Heart right ventricle (tissue), 16 donors: ENCODE measurements at regions of chr15 and their contacts with region 1.

Region 1: GRCh38 chr15:44654858-44655257 is 8.6 kb downstream of the SPG11 start:
- DNase-seq: no peak
- ATAC-seq: no peak
- H3K4me3 ChIP-seq: no peak overlapping the region
- H3K27ac ChIP-seq: no peak overlapping the region
- H3K4me1 ChIP-seq: peaks cover 0 to 21% (median 6%) of the 10 kb centered on the region in 9 donors
- H3K27me3 ChIP-seq: no peaks in the 10 kb centered on the region
- CTCF ChIP-seq: no peak

Region 2: GRCh38 chr15:44584162-44584749 is 70.6 kb before region 1 on chr15:
- intact Hi-C with region 1: loop called in 1 of 10 experiments (anchors 5 kb)
- DNase-seq: peak in 1 of 2 donors; percentile 38
- ATAC-seq: peak in 6 of 8 donors; percentile 49 to 75 (median 70)
- H3K4me3 ChIP-seq: no peak overlapping the region
- H3K27ac ChIP-seq: no peak overlapping the region
- H3K4me1 ChIP-seq: no peaks in the 10 kb centered on the region
- H3K27me3 ChIP-seq: no peaks in the 10 kb centered on the region
- CTCF ChIP-seq: peak in 7 of 9 donors; percentile 18 to 54 (median 48)

Region 3: DNA sequence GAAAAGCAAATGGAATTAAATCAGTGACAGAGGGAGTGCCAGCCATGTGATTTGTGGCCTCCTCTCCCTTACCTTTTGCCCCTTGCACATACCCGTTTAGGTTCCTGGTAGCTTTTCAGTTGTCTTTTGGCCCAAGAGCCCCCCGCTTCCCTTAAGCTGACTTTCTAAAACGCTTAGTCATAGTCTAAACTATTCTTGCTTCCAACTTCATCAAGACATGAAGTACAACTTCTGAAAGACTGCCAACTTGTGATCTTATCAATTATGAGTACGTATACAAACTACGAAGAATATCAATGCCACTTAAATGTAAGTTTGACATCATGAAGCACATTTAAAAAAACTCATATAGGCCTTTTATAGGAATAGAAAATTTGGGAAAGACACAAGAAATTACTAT is 56.0 kb before region 1 on chr15:
- intact Hi-C with region 1: no loop called
- DNase-seq: no peak
- ATAC-seq: no peak
- H3K4me3 ChIP-seq: no peak overlapping the region
- H3K27ac ChIP-seq: peak overlapping the region in 1 of 10 donors; percentile 30
- H3K4me1 ChIP-seq: peaks cover 0 to 4% (median 0%) of the 10 kb centered on the region in 9 donors
- H3K27me3 ChIP-seq: no peaks in the 10 kb centered on the region
- CTCF ChIP-seq: no peak

Region 4: GRCh38 chr15:44711356-44712107 is 56.7 kb after region 1 on chr15 and contains the start of gene B2M:
- intact Hi-C with region 1: no loop called
- DNase-seq: peak; percentile 95
- ATAC-seq: peak; percentile 94 to 98 (median 96)
- H3K4me3 ChIP-seq: peak within 1 kb of the TSS; percentile 80 to 99 (median 91)
- H3K27ac ChIP-seq: peak within 1 kb of the TSS; percentile 95 to 100 (median 99)
- H3K4me1 ChIP-seq: peaks cover 5 to 49% (median 34%) of the 10 kb centered on the region in 9 donors
- H3K27me3 ChIP-seq: no peaks in the 10 kb centered on the region
- CTCF ChIP-seq: peak in 1 of 9 donors; percentile 0
- total RNA-seq, gene B2M: 782 to 5,382 (median 1,085) TPM

Region 5: GRCh38 chr15:44779761-44780160 is 124.9 kb after region 1 on chr15:
- intact Hi-C with region 1: loop called in 1 of 10 experiments (anchors 2 kb)
- DNase-seq: no peak
- ATAC-seq: no peak
- H3K4me3 ChIP-seq: no peak overlapping the region
- H3K27ac ChIP-seq: no peak overlapping the region
- H3K4me1 ChIP-seq: peaks cover 0 to 7% (median 0%) of the 10 kb centered on the region in 9 donors
- H3K27me3 ChIP-seq: no peaks in the 10 kb centered on the region
- CTCF ChIP-seq: no peak